ENCODE measurements at regions of chr15 and their contacts with region 1.

Region 1: DNA sequence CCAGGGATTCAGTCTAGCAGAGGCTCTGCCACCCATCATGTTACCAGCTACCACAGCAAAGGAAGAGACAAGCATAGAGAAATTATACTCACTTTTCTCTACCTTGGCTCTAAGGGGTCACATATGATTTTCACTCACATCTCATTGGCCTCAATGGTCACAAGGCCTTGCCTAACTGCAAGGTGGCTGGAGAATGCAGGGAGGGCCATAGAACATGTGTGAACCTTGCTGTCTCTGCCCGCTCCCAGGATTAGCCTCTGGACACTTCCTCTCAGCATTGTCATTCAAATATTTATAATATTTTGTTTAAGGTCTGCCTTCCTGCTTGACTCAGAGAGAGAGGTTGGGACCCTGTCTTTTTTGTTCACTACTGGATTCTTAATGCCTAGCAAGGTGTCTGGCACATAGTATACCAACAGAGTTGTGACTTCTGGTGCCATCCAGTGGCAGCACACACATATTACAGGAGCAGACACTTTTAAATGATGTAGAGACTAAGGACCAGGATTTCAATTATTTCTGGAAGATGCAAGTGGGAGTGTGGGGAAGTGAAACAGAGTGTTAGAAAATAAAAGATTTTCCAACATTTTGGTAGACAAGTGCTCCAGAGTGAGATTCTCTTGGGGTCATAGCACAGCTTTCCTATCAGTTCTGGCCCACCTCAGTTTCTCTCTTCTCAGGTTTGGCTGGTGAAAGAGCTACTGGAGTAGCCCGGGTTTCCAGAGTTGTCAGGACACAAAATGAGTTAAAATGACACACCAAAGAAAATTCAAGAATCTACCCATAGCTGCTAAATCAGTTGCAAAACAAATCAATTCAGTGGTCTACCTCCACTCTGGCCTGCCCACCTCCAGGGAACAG is 119.0 kb upstream of the RASGRP1 start:
- DNase-seq: peak; percentile 63 to 75 (median 69)
- H3K4me3 ChIP-seq: no peak overlapping the region
- H3K27ac ChIP-seq: no peak overlapping the region
- H3K4me1 ChIP-seq: peaks cover 0 to 31% (median 12%) of the 10 kb centered on the region in 4 experiments
- H3K27me3 ChIP-seq: no peaks in the 10 kb centered on the region

Region 2: GRCh38 chr15:38474155-38474757 is 209.4 kb before region 1 on chr15:
- CTCF ChIA-PET with region 1: interaction called, 29 read pairs
- POLR2A ChIA-PET with region 1: no interaction called
- DNase-seq: peak; percentile 67 to 83 (median 82)
- H3K4me3 ChIP-seq: no peak overlapping the region
- H3K27ac ChIP-seq: no peak overlapping the region
- H3K4me1 ChIP-seq: no peaks in the 10 kb centered on the region
- H3K27me3 ChIP-seq: no peaks in the 10 kb centered on the region

Region 3: DNA sequence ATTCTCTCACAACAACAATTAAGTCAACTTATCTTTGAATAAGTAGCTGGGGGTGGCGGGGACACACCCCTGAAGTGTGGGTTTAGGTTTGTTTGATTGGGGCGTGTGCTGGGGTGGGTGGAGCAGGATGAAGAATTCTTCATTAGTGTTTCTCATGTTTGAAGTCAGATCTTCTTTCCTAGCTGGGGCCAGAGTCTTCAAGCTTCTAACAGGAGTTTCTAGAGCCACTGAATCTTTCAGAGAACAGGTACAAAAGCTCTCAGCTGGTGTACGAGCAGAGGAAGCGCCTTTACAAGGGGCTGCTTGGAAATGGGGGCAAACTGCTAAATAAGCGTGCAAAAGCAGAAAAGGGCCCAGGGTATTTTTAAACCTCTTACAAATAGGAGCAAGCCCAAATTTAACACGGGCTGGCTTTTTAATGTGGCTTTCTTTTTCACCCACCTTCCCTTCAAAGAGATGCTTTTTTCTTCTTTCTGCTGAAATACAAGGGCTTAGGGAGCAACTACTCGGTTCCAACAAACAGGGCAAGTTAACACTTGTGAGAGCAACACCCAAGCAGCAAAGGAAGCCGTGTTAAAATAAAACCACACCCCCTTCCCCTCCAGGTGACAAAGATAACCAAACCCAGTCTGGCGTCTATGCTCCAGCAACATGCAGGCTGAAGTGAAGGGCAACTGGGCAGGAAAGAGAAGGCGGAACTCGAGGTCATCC is 32.1 kb before region 1 on chr15:
- CTCF ChIA-PET with region 1: interaction called, 14 read pairs
- POLR2A ChIA-PET with region 1: no interaction called
- DNase-seq: peak in 1 of 3 donors; percentile 45
- H3K4me3 ChIP-seq: no peak overlapping the region
- H3K27ac ChIP-seq: no peak overlapping the region
- H3K4me1 ChIP-seq: peaks cover 25 to 36% (median 34%) of the 10 kb centered on the region in 4 experiments
- H3K27me3 ChIP-seq: no peaks in the 10 kb centered on the region

Region 4: DNA sequence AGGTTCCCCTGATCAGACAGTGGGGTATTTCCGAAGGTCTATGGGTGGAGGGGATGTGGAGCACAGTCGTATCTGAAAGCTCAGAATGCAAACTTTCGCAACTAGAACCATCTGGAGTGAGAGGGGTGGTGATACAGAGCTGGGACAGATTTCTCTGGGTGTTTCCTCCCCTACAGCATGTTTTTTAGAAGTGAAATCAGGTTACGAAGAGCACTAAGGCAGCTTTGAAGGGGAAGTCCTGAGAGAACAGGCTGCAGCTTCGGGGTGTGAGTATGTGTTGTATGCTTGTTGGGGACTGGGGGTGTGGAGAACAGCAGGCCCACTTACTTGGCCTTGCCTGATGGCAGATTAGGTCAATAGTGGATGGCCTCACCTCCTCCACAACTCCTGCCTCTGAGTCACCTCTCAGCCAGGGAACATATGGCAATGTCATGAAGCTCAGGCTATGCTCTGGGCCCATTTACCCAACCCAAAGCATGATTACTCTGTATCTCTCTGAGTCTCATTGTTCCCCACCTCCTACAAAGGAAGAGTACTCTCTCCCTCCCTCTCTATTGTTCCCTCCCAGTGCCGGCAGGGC is 11.8 kb before region 1 on chr15:
- CTCF ChIA-PET with region 1: interaction called, 16 read pairs
- POLR2A ChIA-PET with region 1: no interaction called
- DNase-seq: peak in 2 of 3 donors; percentile 65 to 71
- H3K4me3 ChIP-seq: no peak overlapping the region
- H3K27ac ChIP-seq: no peak overlapping the region
- H3K4me1 ChIP-seq: peaks cover 17 to 34% (median 26%) of the 10 kb centered on the region in 4 experiments
- H3K27me3 ChIP-seq: peaks cover 0 to 2% (median 0%) of the 10 kb centered on the region in 5 experiments

Measured in common myeloid progenitor, CD34-positive (primary cell).